ENCODE measurements at regions of chr1 and their contacts with region 1.

Region 1: GRCh38 chr1:109548321-109549267 is at the start of gene GNAI3:
- DNase-seq: peak; percentile 96
- H3K4me3 ChIP-seq: peak within 1 kb of the TSS; percentile 67 to 98 (median 89)
- H3K27ac ChIP-seq: peak within 1 kb of the TSS; percentile 67 to 92 (median 92)
- H3K4me1 ChIP-seq: peaks cover 28 to 29% of the 10 kb centered on the region in 2 donors
- H3K27me3 ChIP-seq: no peaks in the 10 kb centered on the region
- CTCF ChIP-seq: no peak
- POLR2A ChIP-seq: peak; percentile 59 to 98
- total RNA-seq, gene GNAI3: 5.1 to 7.2 (median 6.0) TPM

Region 2: GRCh38 chr1:109598655-109599054 is 50.1 kb after region 1 on chr1:
- intact Hi-C with region 1: no loop called
- DNase-seq: no peak
- H3K4me3 ChIP-seq: no peak overlapping the region
- H3K27ac ChIP-seq: no peak overlapping the region
- H3K4me1 ChIP-seq: no peaks in the 10 kb centered on the region
- H3K27me3 ChIP-seq: no peaks in the 10 kb centered on the region
- CTCF ChIP-seq: no peak
- POLR2A ChIP-seq: no peak

Region 3: GRCh38 chr1:109630081-109630897 is 81.7 kb after region 1 on chr1:
- intact Hi-C with region 1: loop called (anchors 5 kb)
- DNase-seq: no peak
- H3K4me3 ChIP-seq: no peak overlapping the region
- H3K27ac ChIP-seq: no peak overlapping the region
- H3K4me1 ChIP-seq: no peaks in the 10 kb centered on the region
- H3K27me3 ChIP-seq: no peaks in the 10 kb centered on the region
- CTCF ChIP-seq: peak in 1 of 6 experiments; percentile 52
- POLR2A ChIP-seq: no peak

Region 4: GRCh38 chr1:109984456-109985275 is 436.1 kb after region 1 on chr1 and contains the start of gene AHCYL1:
- intact Hi-C with region 1: loop called (anchors 10 kb)
- DNase-seq: peak; percentile 100
- H3K4me3 ChIP-seq: peak within 1 kb of the TSS; percentile 42 to 77 (median 68)
- H3K27ac ChIP-seq: peak within 1 kb of the TSS; percentile 93 to 98 (median 97)
- H3K4me1 ChIP-seq: peaks cover 25 to 39% of the 10 kb centered on the region in 2 donors
- H3K27me3 ChIP-seq: no peaks in the 10 kb centered on the region
- CTCF ChIP-seq: peak; percentile 91 to 99 (median 97)
- POLR2A ChIP-seq: peak; percentile 90 to 99
- total RNA-seq, gene AHCYL1: 90.3 to 200 (median 118) TPM